Right cardiac atrium (tissue), 5 donors: ENCODE measurements at regions of chr20 and their contacts with region 1.

Region 1: GRCh38 chr20:11676630-11677284 is 240.9 kb upstream of the BTBD3 start:
- DNase-seq: peak in 2 of 3 donors; percentile 33 to 57
- ATAC-seq: peak; percentile 86 to 92
- H3K4me3 ChIP-seq: no peak overlapping the region
- H3K27ac ChIP-seq: no peak overlapping the region
- H3K4me1 ChIP-seq: no peaks in the 10 kb centered on the region
- H3K27me3 ChIP-seq: no peaks in the 10 kb centered on the region

Region 2: DNA sequence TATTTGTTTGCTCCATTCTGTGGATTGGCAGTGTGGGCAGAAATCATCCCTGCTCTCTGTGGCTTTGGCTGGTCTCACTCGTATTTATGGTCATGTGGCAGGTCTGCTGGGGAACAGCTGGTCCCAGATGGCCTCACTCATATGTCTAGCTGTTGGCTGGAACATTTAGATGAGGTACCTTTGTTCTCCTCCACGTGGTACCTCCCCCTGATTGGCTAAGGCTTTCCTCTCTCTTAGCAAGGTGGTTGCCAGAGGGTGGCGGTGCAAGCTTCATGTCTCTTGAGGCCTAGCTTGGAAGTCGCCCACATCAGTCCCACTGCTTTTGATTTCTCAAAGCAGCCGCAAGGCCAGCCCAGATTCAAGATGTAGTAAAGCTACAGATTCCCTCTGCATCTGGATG is 107.6 kb before region 1 on chr20:
- intact Hi-C with region 1: no loop called
- DNase-seq: no peak
- ATAC-seq: no peak
- H3K4me3 ChIP-seq: no peak overlapping the region
- H3K27ac ChIP-seq: no peak overlapping the region
- H3K4me1 ChIP-seq: no peaks in the 10 kb centered on the region
- H3K27me3 ChIP-seq: no peaks in the 10 kb centered on the region

Region 3: DNA sequence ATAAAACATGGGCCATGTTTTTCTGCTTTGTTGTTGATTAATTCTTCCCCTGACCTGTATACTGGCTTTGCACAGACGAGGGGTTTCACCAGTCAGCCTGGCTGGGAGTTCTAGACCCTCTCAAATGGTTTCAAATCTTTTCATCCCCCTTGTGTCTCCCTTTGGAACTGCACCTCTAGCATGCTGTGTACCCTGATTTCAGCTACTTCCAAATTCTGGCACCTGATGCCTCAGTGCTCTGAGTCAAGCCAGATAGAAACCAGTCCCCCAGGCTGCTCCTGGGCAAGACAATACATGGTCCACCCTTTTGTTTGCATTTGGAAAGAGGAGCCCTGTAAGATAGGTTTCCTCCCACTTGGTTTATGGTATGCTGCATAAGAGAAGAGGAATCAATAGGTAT is 531.1 kb after region 1 on chr20:
- intact Hi-C with region 1: loop called in 2 of 4 experiments (anchors 5 to 10 kb)
- DNase-seq: no peak
- ATAC-seq: no peak
- H3K4me3 ChIP-seq: no peak overlapping the region
- H3K27ac ChIP-seq: no peak overlapping the region
- H3K4me1 ChIP-seq: no peaks in the 10 kb centered on the region
- H3K27me3 ChIP-seq: no peaks in the 10 kb centered on the region